CD8-positive, alpha-beta T cell (primary cell): ENCODE measurements at regions of chr9 and their contacts with region 1.

Region 1: GRCh38 chr9:15837079-15837679 is 284.3 kb downstream of the CCDC171 start:
- DNase-seq: peak in 3 of 9 experiments; percentile 11 to 56 (median 45)
- ATAC-seq: no peak
- H3K4me3 ChIP-seq: no peak overlapping the region
- H3K4me3 Mint-ChIP-seq: no peak overlapping the region
- H3K27ac ChIP-seq: no peak overlapping the region
- H3K27ac Mint-ChIP-seq: no peak overlapping the region
- H3K4me1 ChIP-seq: no peaks in the 10 kb centered on the region
- H3K4me1 Mint-ChIP-seq: no peaks in the 10 kb centered on the region
- H3K27me3 ChIP-seq: no peaks in the 10 kb centered on the region
- H3K27me3 Mint-ChIP-seq: no peaks in the 10 kb centered on the region
- CTCF ChIP-seq: peak; percentile 87

Region 2: DNA sequence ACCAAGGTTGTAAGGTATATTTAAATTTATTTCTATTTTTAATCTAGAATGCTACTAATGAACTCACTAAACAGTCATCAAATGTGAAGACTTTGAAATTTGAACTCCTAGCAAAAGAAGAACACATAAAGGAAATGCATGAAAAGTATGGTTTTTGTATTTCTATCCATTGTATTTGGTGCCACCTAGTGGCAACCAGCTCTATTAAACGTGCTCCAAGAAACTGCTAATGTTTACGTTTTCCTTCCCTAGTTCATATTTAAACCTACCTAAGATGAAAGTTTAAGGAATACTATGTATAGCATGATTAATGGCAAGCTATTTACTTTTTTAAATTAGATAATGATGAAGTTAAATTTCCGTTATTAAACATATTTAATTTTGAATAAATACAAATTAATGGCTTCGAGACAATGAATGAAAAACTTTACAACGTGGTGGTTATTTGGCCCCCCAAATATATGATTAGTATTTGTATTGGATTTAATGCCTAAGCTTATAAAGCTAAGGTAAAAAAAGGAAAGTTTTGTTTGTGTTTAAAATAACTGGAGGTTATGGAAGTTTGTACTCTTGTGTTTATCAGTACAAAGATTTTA is 1625.8 kb after region 1 on chr9:
- CTCF ChIA-PET with region 1: no interaction called
- POLR2A ChIA-PET with region 1: no interaction called
- intact Hi-C with region 1: loop called in 1 of 2 experiments (anchors 2 kb)
- DNase-seq: peak in 4 of 9 experiments; percentile 6 to 51 (median 17)
- ATAC-seq: no peak
- H3K4me3 ChIP-seq: no peak overlapping the region
- H3K4me3 Mint-ChIP-seq: no peak overlapping the region
- H3K27ac ChIP-seq: no peak overlapping the region
- H3K27ac Mint-ChIP-seq: no peak overlapping the region
- H3K4me1 ChIP-seq: no peaks in the 10 kb centered on the region
- H3K4me1 Mint-ChIP-seq: no peaks in the 10 kb centered on the region
- H3K27me3 ChIP-seq: no peaks in the 10 kb centered on the region
- H3K27me3 Mint-ChIP-seq: no peaks in the 10 kb centered on the region
- CTCF ChIP-seq: peak; percentile 71